SK-N-SH (cell line): ENCODE measurements at regions of chr2 and their contacts with region 1.

Region 1: GRCh38 chr2:176140513-176141317 is 10.6 kb upstream of the HOXD4 start:
- DNase-seq: peak; percentile 96
- H3K4me3 ChIP-seq: peak overlapping the region; percentile 61 to 79
- H3K27ac ChIP-seq: peak overlapping the region; percentile 58 to 63
- H3K4me1 ChIP-seq: peaks cover 5 to 27% of the 10 kb centered on the region in 2 experiments; a peak in 2 of 4 replicates
- H3K27me3 ChIP-seq: no peaks in the 10 kb centered on the region
- CTCF ChIP-seq: peak; percentile 87
- EP300 ChIP-seq: no peak
- RAD21 ChIP-seq: peak; percentile 80

Region 2: DNA sequence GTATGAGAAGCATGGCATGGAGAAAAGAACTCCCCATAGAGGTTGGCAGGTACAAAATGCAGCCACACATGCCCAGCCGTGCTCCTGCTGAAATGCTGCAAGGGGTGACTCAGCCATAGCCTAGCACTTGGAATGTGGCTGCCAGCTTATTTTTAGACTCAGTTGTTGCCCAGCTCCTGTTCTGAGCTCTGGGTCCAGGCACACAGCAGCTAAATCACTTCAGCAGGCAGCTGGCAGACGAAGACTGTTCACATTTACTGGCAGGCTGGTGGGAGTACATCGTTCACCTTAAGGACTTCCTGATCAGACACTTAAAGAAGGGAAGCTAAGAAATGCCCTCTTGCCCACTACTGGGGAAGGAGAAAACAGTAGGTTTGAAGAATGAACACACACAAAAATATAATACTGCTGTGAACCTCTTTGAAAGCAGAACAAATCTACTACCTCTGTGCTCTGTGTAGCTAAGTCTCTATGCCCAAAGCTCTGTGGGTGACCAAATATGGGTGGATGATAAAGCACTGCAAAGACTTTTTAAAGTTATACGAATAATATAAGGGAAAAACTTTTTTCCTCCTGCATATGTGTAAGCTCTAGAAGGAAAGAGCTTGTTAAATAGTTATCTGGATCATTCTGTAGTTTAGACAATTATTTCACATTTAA is 284.8 kb before region 1 on chr2:
- CTCF ChIA-PET with region 1: no interaction called
- POLR2A ChIA-PET with region 1: no interaction called
- DNase-seq: no peak
- H3K4me3 ChIP-seq: no peak overlapping the region
- H3K27ac ChIP-seq: peak overlapping the region; percentile 51 to 74
- H3K4me1 ChIP-seq: peaks cover 11 to 22% of the 10 kb centered on the region in 2 experiments; a peak in 3 of 4 replicates
- H3K27me3 ChIP-seq: no peaks in the 10 kb centered on the region
- CTCF ChIP-seq: no peak
- EP300 ChIP-seq: peak in 1 of 2 experiments; percentile 29; a peak in 1 of 4 replicates
- RAD21 ChIP-seq: no peak

Region 3: DNA sequence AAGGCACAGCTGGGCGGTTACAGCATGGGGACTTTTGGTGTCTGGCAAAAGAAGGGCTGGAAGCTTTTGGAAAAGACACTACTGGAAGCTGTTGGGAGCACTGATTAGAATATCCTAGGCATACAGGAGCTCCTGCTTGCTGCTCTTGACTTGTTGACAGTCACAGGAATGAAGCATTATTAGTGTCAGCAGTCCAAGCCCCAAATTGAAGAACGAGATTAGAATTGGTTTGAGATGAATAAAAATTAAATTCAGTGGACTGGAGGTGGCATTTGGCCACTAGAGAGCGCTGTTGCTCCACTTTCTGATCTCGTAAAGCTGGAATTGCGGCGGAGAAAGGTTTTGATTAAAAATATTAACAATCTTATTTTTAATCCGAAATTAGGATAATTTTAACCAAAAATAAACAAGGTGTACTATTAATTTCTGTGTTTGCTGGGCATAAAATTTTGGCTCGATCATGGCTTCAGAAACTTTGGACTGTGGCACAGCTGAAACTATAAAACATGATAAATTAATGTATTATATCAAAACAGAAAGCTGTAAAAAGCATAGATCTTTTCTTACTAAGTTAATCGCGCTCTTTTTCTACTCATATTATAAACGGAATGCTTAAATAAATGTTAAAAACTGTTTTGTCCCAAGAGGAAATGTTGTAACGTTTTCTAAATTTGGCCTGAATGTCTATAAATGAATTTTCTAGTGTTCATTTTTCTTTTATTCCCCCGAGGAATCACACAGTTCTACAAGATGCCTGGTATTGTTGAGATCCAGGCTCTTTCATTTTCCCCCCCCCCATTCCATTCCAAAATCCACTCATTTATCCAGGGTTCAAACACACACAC is 13.6 kb before region 1 on chr2:
- CTCF ChIA-PET with region 1: interaction called, 138 read pairs
- POLR2A ChIA-PET with region 1: interaction called, 6 read pairs
- DNase-seq: peak; percentile 63
- H3K4me3 ChIP-seq: peak overlapping the region; percentile 19 to 25; a peak in 1 of 4 replicates
- H3K27ac ChIP-seq: no peak overlapping the region; a peak in 1 of 4 replicates
- H3K4me1 ChIP-seq: peaks cover 4 to 20% of the 10 kb centered on the region in 2 experiments; a peak in 3 of 4 replicates
- H3K27me3 ChIP-seq: no peaks in the 10 kb centered on the region; the same call in 1 of the 2 replicates
- CTCF ChIP-seq: peak; percentile 97
- EP300 ChIP-seq: no peak; a peak in 1 of 4 replicates
- RAD21 ChIP-seq: peak; percentile 94

Region 4: DNA sequence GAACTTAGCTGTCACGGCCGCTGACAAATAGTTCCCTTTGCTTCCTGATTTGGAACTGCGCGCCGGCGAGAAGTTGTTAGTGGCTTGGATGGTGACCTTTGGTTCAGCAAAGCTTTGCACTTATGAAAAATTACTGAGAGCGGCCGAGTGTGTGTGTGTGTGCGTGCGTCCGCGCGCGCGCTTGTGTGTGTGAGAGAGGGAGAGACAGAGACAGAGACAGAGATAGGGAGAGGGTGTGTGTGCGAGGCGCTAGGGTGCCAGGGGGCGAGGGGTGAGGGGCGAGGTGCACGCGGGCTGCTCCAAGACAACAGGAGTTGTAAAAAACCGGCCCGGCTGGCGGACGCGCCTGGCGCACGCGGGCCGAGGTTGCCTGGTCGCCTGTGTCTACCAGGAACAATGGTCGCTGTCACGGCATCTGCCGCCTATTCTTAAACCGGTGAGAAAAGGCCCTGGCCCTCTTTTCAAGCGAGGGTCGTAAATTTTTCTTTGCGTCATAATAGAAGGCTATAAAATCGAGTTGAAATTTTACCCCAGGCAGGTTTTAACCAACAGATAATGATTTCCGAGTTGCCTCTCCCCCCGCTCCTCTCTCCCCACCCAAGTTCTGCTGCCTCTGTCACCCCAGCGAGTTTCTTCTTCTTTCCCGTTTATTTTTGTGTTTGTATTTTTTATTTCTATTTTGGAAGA is 16.9 kb after region 1 on chr2:
- CTCF ChIA-PET with region 1: interaction called, 53 read pairs
- POLR2A ChIA-PET with region 1: interaction called, 9 read pairs
- DNase-seq: peak; percentile 88
- H3K4me3 ChIP-seq: peak overlapping the region; percentile 54 to 71
- H3K27ac ChIP-seq: peak overlapping the region in 1 of 2 experiments; percentile 89; a peak in 2 of 4 replicates
- H3K4me1 ChIP-seq: peaks cover 0 to 8% of the 10 kb centered on the region in 2 experiments; a peak in 2 of 4 replicates
- H3K27me3 ChIP-seq: no peaks in the 10 kb centered on the region
- CTCF ChIP-seq: no peak
- EP300 ChIP-seq: no peak
- RAD21 ChIP-seq: no peak; the same call in 1 of the 2 replicates

Region 5: GRCh38 chr2:176445956-176446355 is 305.2 kb after region 1 on chr2:
- CTCF ChIA-PET with region 1: interaction called, 18 read pairs
- POLR2A ChIA-PET with region 1: no interaction called
- DNase-seq: no peak
- H3K4me3 ChIP-seq: no peak overlapping the region
- H3K27ac ChIP-seq: no peak overlapping the region
- H3K4me1 ChIP-seq: no peaks in the 10 kb centered on the region; a peak in 1 of 4 replicates
- H3K27me3 ChIP-seq: no peaks in the 10 kb centered on the region
- CTCF ChIP-seq: no peak
- EP300 ChIP-seq: no peak
- RAD21 ChIP-seq: no peak

Region 6: GRCh38 chr2:176565641-176566323 is 425.1 kb after region 1 on chr2:
- CTCF ChIA-PET with region 1: interaction called, 26 read pairs
- POLR2A ChIA-PET with region 1: interaction called, 3 read pairs
- DNase-seq: no peak
- H3K4me3 ChIP-seq: no peak overlapping the region
- H3K27ac ChIP-seq: no peak overlapping the region
- H3K4me1 ChIP-seq: peaks cover 3 to 18% of the 10 kb centered on the region in 2 experiments; a peak in 2 of 4 replicates
- H3K27me3 ChIP-seq: no peaks in the 10 kb centered on the region
- CTCF ChIP-seq: no peak
- EP300 ChIP-seq: no peak
- RAD21 ChIP-seq: no peak

Region 7: GRCh38 chr2:176582990-176583481 is 442.3 kb after region 1 on chr2:
- CTCF ChIA-PET with region 1: interaction called, 16 read pairs
- POLR2A ChIA-PET with region 1: no interaction called
- DNase-seq: no peak
- H3K4me3 ChIP-seq: no peak overlapping the region; a peak in 1 of 4 replicates
- H3K27ac ChIP-seq: peak overlapping the region; percentile 68 to 84
- H3K4me1 ChIP-seq: peaks cover 21 to 23% of the 10 kb centered on the region in 2 experiments; a peak in 3 of 4 replicates
- H3K27me3 ChIP-seq: no peaks in the 10 kb centered on the region
- CTCF ChIP-seq: no peak
- EP300 ChIP-seq: peak in 1 of 2 experiments; percentile 76; a peak in 2 of 4 replicates
- RAD21 ChIP-seq: no peak